ENCODE measurements at regions of chr6 and their contacts with region 1.

Region 1: GRCh38 chr6:137728385-137729349 is 138.4 kb upstream of the TNFAIP3 start:
- DNase-seq: peak in 2 of 14 experiments; percentile 36 to 49
- ATAC-seq: no peak
- H3K4me3 ChIP-seq: no peak overlapping the region
- H3K4me3 Mint-ChIP-seq: no peak overlapping the region
- H3K27ac ChIP-seq: no peak overlapping the region
- H3K27ac Mint-ChIP-seq: no peak overlapping the region
- H3K4me1 ChIP-seq: no peaks in the 10 kb centered on the region
- H3K4me1 Mint-ChIP-seq: no peaks in the 10 kb centered on the region
- H3K27me3 ChIP-seq: no peaks in the 10 kb centered on the region
- H3K27me3 Mint-ChIP-seq: no peaks in the 10 kb centered on the region
- CTCF ChIP-seq: no peak

Region 2: GRCh38 chr6:137767911-137768690 is 39.4 kb after region 1 on chr6:
- CTCF ChIA-PET with region 1: no interaction called
- POLR2A ChIA-PET with region 1: no interaction called
- intact Hi-C with region 1: loop called in 1 of 2 experiments (anchors 5 kb)
- DNase-seq: peak in 3 of 14 experiments; percentile 49 to 64 (median 54)
- ATAC-seq: peak; percentile 73
- H3K4me3 ChIP-seq: no peak overlapping the region
- H3K4me3 Mint-ChIP-seq: peak overlapping the region; percentile 72
- H3K27ac ChIP-seq: peak overlapping the region; percentile 44 to 47
- H3K27ac Mint-ChIP-seq: peak overlapping the region; percentile 73
- H3K4me1 ChIP-seq: peaks cover 15% of the 10 kb centered on the region
- H3K4me1 Mint-ChIP-seq: peaks cover 26% of the 10 kb centered on the region
- H3K27me3 ChIP-seq: no peaks in the 10 kb centered on the region
- H3K27me3 Mint-ChIP-seq: no peaks in the 10 kb centered on the region
- CTCF ChIP-seq: no peak

Region 3: DNA sequence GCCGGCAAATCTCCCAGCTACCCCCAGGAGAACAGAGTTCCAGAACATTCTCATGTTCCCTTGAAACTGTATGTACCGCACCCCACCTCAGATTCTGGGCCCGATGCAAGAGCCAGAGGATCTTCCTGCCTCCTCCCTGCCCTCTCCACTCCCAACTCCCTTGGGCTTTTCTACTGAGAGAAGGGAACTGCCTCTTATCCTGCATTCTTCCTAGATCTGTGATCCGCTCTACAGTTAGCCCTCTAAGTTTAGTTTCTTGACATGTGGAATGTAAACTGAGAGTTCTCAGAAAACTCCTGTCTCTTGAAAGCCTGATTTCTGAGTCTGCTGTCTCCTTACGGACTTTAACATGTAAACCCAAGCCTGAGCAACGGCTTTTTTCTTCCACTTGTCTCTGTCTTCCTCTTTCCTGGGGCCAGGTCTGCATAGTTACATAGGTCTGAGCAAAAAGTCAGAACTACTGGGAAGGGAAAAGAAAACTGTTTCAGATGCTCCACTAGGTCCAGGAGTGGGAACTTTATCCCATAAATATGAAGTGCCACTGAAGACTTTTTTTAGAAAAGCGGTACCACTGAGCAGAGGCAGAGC is 51.9 kb after region 1 on chr6:
- CTCF ChIA-PET with region 1: no interaction called
- POLR2A ChIA-PET with region 1: no interaction called
- intact Hi-C with region 1: loop called in 1 of 2 experiments (anchors 5 kb)
- DNase-seq: no peak
- ATAC-seq: no peak
- H3K4me3 ChIP-seq: no peak overlapping the region
- H3K4me3 Mint-ChIP-seq: no peak overlapping the region
- H3K27ac ChIP-seq: no peak overlapping the region
- H3K27ac Mint-ChIP-seq: no peak overlapping the region
- H3K4me1 ChIP-seq: no peaks in the 10 kb centered on the region
- H3K4me1 Mint-ChIP-seq: no peaks in the 10 kb centered on the region
- H3K27me3 ChIP-seq: no peaks in the 10 kb centered on the region
- H3K27me3 Mint-ChIP-seq: no peaks in the 10 kb centered on the region
- CTCF ChIP-seq: no peak

Measured in CD4-positive, alpha-beta T cell (primary cell).